HEK293T (cell line): ENCODE measurements at regions of chr3 and their contacts with region 1.

Region 1: GRCh38 chr3:137163241-137163871 is 205.6 kb downstream of the IL20RB start:
- DNase-seq: no peak

Region 2: GRCh38 chr3:137108699-137109440 is 54.5 kb before region 1 on chr3:
- CTCF ChIA-PET with region 1: interaction called, 13 read pairs
- POLR2A ChIA-PET with region 1: no interaction called
- DNase-seq: no peak